ENCODE measurements at regions of chr11 and their contacts with region 1.

Region 1: GRCh38 chr11:16902781-16903378 is 111.3 kb downstream of the PLEKHA7 start:
- DNase-seq: peak; percentile 63
- H3K4me3 Mint-ChIP-seq: peak overlapping the region; percentile 46
- H3K27ac Mint-ChIP-seq: peak overlapping the region; percentile 97
- H3K4me1 Mint-ChIP-seq: peaks cover 42% of the 10 kb centered on the region
- H3K27me3 Mint-ChIP-seq: no peaks in the 10 kb centered on the region

Region 2: DNA sequence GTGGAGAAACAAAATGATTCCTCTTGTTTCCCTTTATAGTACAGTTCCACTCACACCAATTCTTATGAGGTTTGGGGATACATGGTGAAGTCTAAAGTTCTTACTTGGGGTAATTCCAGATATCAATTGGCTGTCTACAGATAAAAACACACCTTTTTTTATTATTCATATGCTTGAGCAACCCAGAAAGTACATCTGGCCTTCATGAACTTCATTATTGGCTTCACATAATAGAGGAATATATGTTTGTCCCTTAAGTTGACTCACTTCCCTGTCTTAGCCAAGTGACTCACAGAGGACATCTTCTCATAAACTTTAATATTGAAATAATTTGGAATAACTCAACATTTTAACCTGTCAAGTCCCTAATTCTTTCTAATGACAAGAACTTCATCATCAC is 510.3 kb before region 1 on chr11:
- intact Hi-C with region 1: no loop called
- DNase-seq: no peak
- H3K4me3 Mint-ChIP-seq: no peak overlapping the region
- H3K27ac Mint-ChIP-seq: no peak overlapping the region
- H3K4me1 Mint-ChIP-seq: no peaks in the 10 kb centered on the region
- H3K27me3 Mint-ChIP-seq: no peaks in the 10 kb centered on the region

Region 3: DNA sequence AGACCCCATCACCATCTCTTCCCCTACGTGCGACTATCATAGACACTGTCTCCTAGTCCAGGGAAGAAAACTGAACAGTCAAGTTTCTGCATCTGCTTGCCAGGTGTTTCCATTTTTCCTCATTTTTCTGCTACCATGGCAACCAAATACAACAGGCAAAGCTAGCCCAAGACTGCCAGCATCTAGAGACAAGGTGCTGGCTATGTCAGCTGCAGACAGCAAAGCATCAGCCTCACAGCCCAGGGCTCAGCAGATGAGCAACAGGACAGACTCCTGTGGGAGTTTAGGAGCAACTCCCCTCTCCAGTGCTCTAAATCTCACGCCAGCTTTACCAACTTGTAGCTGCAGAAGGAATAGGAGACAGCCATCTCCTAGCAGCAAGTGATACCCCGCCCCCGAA is 40.1 kb before region 1 on chr11:
- intact Hi-C with region 1: loop called (anchors 1 kb)
- DNase-seq: no peak
- H3K4me3 Mint-ChIP-seq: peak overlapping the region; percentile 6
- H3K27ac Mint-ChIP-seq: no peak overlapping the region
- H3K4me1 Mint-ChIP-seq: peaks cover 25% of the 10 kb centered on the region
- H3K27me3 Mint-ChIP-seq: no peaks in the 10 kb centered on the region

Region 4: DNA sequence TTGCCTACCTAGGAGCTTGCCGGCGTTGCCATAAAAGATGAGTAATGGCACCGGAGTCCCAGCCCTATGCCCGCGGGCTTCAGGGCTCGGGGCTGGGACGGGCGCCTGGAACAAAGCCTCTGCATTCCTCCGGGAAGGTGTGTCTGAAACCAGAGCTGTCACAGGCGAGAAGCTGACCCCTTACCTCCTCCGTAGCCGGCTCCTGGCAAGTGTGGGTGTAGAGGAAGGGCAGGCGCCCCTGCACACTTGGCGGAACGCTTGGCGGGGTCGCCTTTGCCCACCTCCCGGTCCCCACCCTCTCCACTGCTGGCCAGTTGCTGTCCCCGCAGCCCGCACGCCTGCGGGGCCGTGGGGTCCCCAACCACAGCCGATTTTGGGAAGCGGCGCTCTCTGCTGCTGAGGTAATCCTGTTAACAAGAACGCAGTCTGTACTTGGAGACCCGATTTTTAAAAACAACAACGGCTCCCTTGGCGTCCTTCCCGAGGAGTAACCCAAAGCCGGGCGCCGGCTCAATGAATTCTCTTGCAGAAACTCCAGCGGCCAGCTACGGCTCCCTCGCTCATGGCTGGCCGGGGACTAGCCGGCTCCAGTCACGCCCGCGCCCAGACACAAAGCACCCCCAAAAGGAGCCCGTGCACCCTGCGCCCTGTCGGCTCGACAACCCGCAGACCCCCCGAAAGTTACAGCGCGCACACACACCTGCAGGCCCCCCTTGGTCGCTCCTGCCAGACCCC is 22.1 kb after region 1 on chr11:
- intact Hi-C with region 1: loop called (anchors 1 kb)
- DNase-seq: no peak
- H3K4me3 Mint-ChIP-seq: peak overlapping the region; percentile 89
- H3K27ac Mint-ChIP-seq: no peak overlapping the region
- H3K4me1 Mint-ChIP-seq: peaks cover 17% of the 10 kb centered on the region
- H3K27me3 Mint-ChIP-seq: peaks cover 46% of the 10 kb centered on the region

Region 5: GRCh38 chr11:16935518-16936302 is 32.8 kb after region 1 on chr11:
- intact Hi-C with region 1: no loop called
- DNase-seq: peak; percentile 74
- H3K4me3 Mint-ChIP-seq: no peak overlapping the region
- H3K27ac Mint-ChIP-seq: no peak overlapping the region
- H3K4me1 Mint-ChIP-seq: no peaks in the 10 kb centered on the region
- H3K27me3 Mint-ChIP-seq: peaks cover 6% of the 10 kb centered on the region

Region 6: GRCh38 chr11:17145972-17146371 is 243.1 kb after region 1 on chr11:
- intact Hi-C with region 1: loop called (anchors 5 kb)
- DNase-seq: no peak
- H3K4me3 Mint-ChIP-seq: no peak overlapping the region
- H3K27ac Mint-ChIP-seq: peak overlapping the region; percentile 53
- H3K4me1 Mint-ChIP-seq: peaks cover 13% of the 10 kb centered on the region
- H3K27me3 Mint-ChIP-seq: no peaks in the 10 kb centered on the region

Region 7: DNA sequence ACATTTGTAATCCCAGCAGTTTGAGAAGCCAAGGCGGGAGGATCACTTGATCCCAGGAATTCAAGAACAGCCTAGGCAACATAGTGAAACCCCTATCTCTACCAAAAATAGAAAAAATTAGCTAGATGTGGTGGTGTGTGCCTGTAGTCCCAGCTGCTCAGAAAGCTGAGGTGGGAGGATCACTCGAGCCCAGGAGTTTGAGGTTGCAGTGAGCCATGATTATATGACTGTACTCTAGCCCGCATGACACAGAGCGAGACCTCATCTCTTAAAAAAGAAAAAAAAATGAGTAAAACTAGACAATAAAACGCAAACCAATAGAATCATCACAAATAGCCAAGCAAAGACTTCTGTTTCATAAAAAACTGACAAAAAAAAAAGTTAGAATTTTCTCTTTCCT is 395.4 kb after region 1 on chr11:
- intact Hi-C with region 1: loop called (anchors 5 kb)
- DNase-seq: peak; percentile 70
- H3K4me3 Mint-ChIP-seq: peak overlapping the region; percentile 5
- H3K27ac Mint-ChIP-seq: no peak overlapping the region
- H3K4me1 Mint-ChIP-seq: peaks cover 27% of the 10 kb centered on the region
- H3K27me3 Mint-ChIP-seq: no peaks in the 10 kb centered on the region

Measured in activated CD4-positive, alpha-beta T cell treated with anti-CD3 and anti-CD28 coated beads, Interleukin-2, amount 10 ng/mL, durations not matched to agents 24 days and 14 days (primary cell).